ENCODE measurements at regions of chr4 and their contacts with region 1.

Region 1: DNA sequence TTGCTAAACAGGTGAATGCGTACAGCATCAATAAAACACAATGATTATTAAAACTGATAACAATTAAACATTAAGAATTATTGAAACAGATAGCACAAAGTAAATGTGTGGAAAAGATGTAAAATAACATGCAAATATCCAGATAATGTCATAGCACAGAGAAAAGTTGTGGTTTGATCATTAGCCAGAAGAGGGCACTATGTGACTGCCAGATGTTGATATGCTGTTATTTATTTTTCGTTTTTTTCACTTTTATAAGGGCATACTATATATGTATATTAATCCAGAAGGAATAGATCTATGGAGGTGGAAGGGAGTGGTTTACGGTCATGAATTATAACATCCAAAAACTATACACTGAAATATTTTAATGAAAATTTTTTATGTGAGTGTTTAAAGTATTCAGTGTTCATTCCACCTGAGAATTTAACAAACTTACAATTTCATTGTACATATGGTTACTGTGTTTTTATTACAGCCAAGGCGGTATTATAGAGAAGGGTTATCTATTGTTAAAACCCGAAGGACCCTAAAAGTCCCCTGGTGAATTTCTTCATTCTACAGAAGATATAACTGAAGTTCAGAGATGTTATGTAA is 211.9 kb upstream of the UGT8 start:
- DNase-seq: no peak
- H3K4me3 ChIP-seq: no peak overlapping the region
- H3K27ac ChIP-seq: no peak overlapping the region
- H3K4me1 ChIP-seq: peaks cover 0 to 5% (median 0%) of the 10 kb centered on the region in 4 donors
- H3K27me3 ChIP-seq: no peaks in the 10 kb centered on the region
- CTCF ChIP-seq: peak; percentile 59 to 71 (median 67)
- EP300 ChIP-seq: no peak
- POLR2A ChIP-seq: no peak

Region 2: GRCh38 chr4:113411496-113411938 is 975.2 kb before region 1 on chr4:
- in situ Hi-C with region 1: loop called in 1 of 4 experiments (anchors 25 kb)
- intact Hi-C with region 1: no loop called
- DNase-seq: no peak
- H3K4me3 ChIP-seq: no peak overlapping the region
- H3K27ac ChIP-seq: no peak overlapping the region
- H3K4me1 ChIP-seq: no peaks in the 10 kb centered on the region
- H3K27me3 ChIP-seq: no peaks in the 10 kb centered on the region
- CTCF ChIP-seq: no peak
- EP300 ChIP-seq: no peak
- POLR2A ChIP-seq: no peak

Region 3: DNA sequence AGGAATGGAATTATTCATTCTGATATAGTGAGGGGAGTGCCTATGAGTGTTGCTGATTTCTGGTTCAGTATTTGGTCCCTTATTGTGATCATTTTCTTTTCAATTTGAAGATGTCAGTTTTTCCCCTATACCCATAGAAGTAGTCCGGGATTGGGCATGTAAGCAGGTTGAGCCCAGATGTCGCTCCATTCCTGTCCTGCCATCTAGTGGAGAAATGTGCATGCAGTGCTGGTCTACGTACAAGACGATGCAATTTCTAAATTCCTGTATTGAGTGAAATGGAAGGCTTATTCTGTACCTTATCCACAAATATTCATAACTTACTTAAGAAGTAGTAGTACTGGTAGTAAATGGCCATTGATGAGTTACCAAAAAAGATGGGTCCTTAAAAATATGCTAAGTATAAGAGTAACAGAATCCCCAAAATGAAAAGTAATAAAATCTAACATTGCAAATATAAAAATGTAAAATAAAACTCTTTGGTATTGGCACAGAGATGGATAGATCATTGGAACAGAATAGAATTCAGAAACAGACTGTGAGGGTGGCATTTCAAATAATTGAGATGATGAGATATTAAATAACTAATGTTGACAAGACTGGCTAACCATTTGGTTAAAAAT is 272.8 kb after region 1 on chr4:
- in situ Hi-C with region 1: loop called in 3 of 4 experiments (anchors 10 to 25 kb)
- intact Hi-C with region 1: no loop called
- DNase-seq: peak; percentile 70
- H3K4me3 ChIP-seq: no peak overlapping the region
- H3K27ac ChIP-seq: no peak overlapping the region
- H3K4me1 ChIP-seq: peaks cover 0 to 7% (median 0%) of the 10 kb centered on the region in 4 donors
- H3K27me3 ChIP-seq: no peaks in the 10 kb centered on the region
- CTCF ChIP-seq: peak; percentile 72 to 80 (median 76)
- EP300 ChIP-seq: no peak
- POLR2A ChIP-seq: no peak

Measured in transverse colon (tissue), 4 donors.